Activated B cell treated with CpG ODN at 0.5 μM for 24 hours (primary cell): ENCODE measurements at regions of chr2 and their contacts with region 1.

Region 1: DNA sequence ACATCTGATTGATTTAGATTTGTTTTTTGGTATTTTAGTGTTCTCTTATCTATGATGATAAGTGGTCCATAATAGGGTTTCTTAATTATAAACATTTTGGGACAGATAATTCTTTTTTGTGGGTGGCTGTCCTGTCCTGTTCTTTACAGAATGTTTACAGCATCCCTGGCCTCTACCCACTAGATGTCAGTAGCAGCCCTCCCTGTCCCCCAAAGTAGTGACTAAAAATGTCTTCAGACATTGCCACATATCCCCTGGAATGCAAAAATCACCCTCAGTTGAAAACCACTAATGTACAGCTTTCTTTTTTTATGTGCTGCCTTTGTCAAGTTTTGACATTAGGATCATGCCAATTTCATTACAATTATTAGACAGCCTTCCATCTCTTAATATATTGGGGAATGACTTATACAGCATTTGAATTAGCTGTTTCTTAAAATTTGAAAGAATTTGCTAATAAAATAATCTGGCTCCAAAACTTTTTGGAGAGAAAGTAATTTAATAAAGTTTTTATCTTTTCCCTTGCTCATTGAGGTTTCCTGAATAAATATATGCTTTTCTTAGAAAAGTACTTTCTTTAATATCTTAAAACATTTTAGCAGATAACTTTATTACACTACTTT is 19.5 kb downstream of the WIPF1 start:
- DNase-seq: no peak
- ATAC-seq: peak; percentile 74
- H3K4me3 Mint-ChIP-seq: no peak overlapping the region
- H3K27ac Mint-ChIP-seq: peak overlapping the region; percentile 30
- H3K4me1 Mint-ChIP-seq: peaks cover 55% of the 10 kb centered on the region
- H3K27me3 Mint-ChIP-seq: no peaks in the 10 kb centered on the region
- CTCF ChIP-seq: peak; percentile 34

Region 2: DNA sequence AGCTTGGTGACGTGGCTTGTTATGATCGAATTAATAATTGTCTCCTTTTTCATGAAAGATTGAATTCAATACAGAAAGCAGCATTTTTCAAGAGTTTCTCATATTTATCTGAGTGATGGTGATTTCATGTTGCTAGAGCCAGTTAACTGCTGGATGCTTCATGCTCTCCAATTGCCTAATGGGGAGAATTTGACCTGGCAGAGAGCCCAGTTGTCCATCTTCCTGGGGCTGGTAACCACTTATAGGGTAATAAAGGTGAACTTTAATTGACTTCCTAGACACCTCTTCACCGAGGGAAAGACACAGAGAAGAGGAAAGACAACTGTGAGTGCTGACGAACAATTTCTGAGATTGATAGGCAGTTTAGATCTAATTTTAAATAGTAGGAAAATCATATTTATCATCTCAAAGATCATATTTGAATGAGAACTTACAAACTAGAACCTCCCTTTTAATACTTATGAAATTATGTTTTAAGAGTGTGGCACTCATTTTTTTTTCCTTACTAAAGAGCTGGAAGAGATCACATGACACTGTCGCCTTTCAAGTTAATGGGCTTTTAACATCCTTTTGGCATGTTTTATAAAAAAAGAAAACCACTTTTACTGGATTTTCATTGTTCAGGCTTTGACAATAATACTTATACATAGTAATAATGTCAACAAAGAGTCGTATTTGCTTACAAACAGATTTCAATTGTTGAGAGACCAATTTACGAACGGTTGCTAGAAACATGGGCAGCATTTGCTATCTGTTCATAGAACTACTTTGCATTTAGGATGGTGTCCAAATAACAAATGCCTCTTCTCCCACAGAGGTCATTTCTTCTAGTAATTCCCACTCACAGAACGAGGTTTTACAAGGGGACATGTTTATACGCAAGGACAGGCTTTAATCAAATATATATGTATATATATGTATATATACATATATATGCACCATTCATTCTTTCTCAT is 1689.1 kb before region 1 on chr2:
- CTCF ChIA-PET with region 1: no interaction called
- POLR2A ChIA-PET with region 1: no interaction called
- intact Hi-C with region 1: no loop called
- DNase-seq: no peak
- ATAC-seq: no peak
- H3K4me3 Mint-ChIP-seq: no peak overlapping the region
- H3K27ac Mint-ChIP-seq: no peak overlapping the region
- H3K4me1 Mint-ChIP-seq: no peaks in the 10 kb centered on the region
- H3K27me3 Mint-ChIP-seq: peaks cover 7% of the 10 kb centered on the region
- CTCF ChIP-seq: no peak

Region 3: DNA sequence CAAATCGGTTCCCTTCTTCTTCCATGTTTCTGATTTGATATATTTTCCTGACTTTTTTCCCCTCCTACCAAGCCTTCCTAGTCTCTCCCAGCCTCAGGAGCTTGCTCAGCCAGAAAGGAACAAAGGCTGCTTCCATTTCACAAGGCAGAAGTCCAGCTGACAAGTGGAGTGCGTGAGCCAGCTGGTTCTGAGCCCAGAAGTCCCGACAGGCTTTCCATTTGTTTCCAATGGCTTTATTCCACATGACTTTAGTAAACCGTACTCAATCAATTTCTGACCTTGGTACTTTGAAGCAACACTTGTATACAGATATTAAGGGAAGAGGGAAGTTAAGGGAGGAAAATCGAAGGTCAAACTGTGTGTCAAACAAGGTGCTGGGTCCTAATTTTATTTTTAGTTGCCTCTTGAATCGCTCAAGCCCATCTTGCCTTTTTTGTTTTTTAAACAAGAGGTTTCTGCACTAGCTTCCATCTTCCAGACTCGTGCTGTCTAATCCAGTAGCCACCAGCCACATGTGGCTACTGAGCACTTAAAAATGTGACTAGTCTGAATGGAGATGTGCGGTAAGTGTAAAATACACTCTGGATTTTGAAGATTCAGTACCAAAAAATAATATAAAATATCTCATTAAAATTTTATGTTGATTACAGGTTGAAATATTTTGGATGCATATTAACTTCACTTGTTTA is 16.7 kb before region 1 on chr2:
- CTCF ChIA-PET with region 1: no interaction called
- POLR2A ChIA-PET with region 1: no interaction called
- intact Hi-C with region 1: loop called (anchors 2 kb)
- DNase-seq: no peak
- ATAC-seq: no peak
- H3K4me3 Mint-ChIP-seq: no peak overlapping the region
- H3K27ac Mint-ChIP-seq: no peak overlapping the region
- H3K4me1 Mint-ChIP-seq: no peaks in the 10 kb centered on the region
- H3K27me3 Mint-ChIP-seq: no peaks in the 10 kb centered on the region
- CTCF ChIP-seq: no peak

Region 4: GRCh38 chr2:174603280-174603679 is 25.2 kb after region 1 on chr2:
- CTCF ChIA-PET with region 1: interaction called, 125 read pairs
- POLR2A ChIA-PET with region 1: interaction called, 137 read pairs
- intact Hi-C with region 1: loop called (anchors 1 kb)
- DNase-seq: no peak
- ATAC-seq: peak; percentile 25
- H3K4me3 Mint-ChIP-seq: no peak overlapping the region
- H3K27ac Mint-ChIP-seq: peak overlapping the region; percentile 68
- H3K4me1 Mint-ChIP-seq: peaks cover 82% of the 10 kb centered on the region
- H3K27me3 Mint-ChIP-seq: no peaks in the 10 kb centered on the region
- CTCF ChIP-seq: no peak

Region 5: DNA sequence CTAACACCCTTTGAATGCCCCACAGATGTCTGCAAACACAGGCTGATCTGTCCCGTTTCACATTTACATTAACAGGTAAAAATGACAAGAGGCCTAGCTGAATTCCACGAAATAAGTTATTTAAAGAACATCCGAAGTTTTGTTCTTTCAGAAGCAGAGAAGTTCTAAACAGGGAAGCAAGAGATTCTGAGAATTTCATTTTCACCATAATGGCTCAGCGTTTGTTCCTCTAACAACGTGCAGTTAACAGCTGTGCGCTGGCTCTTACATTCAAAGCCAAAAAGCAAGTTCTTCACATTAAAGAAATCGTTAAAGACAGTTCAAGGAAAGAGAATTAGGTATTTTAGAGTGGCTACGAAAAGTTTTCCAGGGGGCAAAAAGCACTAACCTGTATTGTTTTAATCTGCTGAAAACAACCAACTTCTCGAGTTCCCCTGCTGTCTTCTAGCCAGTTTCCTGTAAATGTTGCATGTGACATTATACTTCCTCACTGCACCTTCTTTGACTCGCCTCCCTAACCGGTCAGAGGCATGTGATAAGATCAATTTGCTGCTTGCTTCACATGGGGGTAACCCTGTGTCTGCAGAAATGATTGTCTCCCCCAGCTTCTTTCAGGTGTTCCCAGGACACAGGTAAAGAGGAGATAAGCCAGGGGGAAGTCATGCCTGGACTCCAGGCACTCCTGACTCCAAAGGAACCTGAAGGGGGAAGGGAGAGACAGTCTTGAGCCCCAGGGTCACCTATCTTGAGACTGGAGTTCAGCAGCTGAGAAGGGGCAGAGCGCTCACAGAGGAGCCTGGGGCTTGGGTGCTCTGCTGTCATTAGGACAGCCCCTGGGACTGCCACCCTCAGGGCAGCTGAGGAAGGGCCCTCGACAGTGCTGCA is 56.3 kb after region 1 on chr2:
- CTCF ChIA-PET with region 1: interaction called, 18 read pairs
- POLR2A ChIA-PET with region 1: interaction called, 7 read pairs
- intact Hi-C with region 1: loop called (anchors 1 kb)
- DNase-seq: peak; percentile 29
- ATAC-seq: peak; percentile 77
- H3K4me3 Mint-ChIP-seq: peak overlapping the region; percentile 95
- H3K27ac Mint-ChIP-seq: peak overlapping the region; percentile 98
- H3K4me1 Mint-ChIP-seq: peaks cover 58% of the 10 kb centered on the region
- H3K27me3 Mint-ChIP-seq: no peaks in the 10 kb centered on the region
- CTCF ChIP-seq: no peak

Region 6: DNA sequence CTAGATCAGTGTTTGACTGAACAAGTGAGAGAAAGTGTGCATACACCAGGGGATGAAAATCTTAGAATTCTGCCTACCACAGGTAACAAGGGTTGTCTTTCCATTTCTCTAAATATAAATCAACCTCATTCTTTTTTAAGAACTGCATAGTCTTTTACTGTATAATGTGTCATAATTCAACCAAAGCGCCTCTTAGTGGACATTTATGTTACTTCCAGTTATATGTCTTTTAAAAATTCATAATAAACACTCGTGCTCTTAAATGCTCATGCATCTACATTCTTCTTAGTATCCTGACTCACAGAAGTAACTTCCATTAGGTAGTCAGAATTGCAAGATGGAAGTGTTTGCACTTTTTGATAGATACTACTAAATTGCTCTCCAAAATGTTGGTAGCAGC is 110.0 kb after region 1 on chr2:
- CTCF ChIA-PET with region 1: interaction called, 153 read pairs
- POLR2A ChIA-PET with region 1: interaction called, 5 read pairs
- intact Hi-C with region 1: loop called (anchors 1 kb)
- DNase-seq: no peak
- ATAC-seq: peak; percentile 41
- H3K4me3 Mint-ChIP-seq: no peak overlapping the region
- H3K27ac Mint-ChIP-seq: no peak overlapping the region
- H3K4me1 Mint-ChIP-seq: peaks cover 11% of the 10 kb centered on the region
- H3K27me3 Mint-ChIP-seq: peaks cover 3% of the 10 kb centered on the region
- CTCF ChIP-seq: peak; percentile 55